ENCODE measurements at regions of chr5 and their contacts with region 1.

Region 1: GRCh38 chr5:39217365-39218281 is 1.7 kb downstream of the FYB1 start:
- DNase-seq: peak; percentile 76
- H3K27ac ChIP-seq: no peak overlapping the region
- CTCF ChIP-seq: peak; percentile 98

Region 2: DNA sequence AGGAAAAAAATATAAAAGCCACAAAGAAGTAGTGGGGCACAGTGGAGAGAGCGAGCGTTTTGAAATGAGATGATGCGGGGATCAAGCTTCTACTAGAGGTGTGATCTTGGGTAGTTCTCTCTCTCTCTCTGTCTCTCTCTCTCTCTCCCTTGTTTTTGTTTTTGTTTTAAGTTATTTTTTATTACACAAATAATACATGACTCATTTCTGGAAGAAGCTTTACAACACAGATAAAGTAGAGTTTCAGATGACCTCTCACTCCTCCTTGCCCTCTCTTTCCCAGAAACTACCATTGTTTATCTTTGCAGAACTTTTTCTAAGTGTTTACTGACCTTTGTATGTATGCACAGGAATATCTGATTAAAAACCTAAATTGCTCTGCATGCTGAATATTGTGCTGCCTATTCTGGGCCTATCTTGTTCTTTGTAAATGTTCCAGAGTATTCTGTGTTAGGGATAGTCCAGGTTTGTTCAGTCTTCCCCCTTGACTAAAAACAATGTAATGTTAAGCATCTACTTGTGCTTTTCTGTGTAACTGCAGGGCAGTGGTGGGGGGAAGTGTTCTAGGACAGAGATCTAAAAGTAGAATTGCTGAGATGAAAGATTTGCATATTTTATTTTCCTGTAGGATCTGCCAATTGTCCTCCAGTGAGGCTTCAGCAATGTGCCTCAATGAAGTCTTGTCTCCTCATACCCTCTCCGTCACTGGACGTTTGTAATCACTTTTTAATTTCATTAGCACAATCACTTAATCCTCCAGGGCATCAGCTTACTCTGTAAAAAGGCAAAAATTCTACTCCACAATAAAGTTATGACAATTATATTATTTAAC is 50.3 kb before region 1 on chr5:
- CTCF ChIA-PET with region 1: no interaction called
- POLR2A ChIA-PET with region 1: no interaction called
- DNase-seq: no peak
- H3K27ac ChIP-seq: no peak overlapping the region
- CTCF ChIP-seq: no peak

Region 3: DNA sequence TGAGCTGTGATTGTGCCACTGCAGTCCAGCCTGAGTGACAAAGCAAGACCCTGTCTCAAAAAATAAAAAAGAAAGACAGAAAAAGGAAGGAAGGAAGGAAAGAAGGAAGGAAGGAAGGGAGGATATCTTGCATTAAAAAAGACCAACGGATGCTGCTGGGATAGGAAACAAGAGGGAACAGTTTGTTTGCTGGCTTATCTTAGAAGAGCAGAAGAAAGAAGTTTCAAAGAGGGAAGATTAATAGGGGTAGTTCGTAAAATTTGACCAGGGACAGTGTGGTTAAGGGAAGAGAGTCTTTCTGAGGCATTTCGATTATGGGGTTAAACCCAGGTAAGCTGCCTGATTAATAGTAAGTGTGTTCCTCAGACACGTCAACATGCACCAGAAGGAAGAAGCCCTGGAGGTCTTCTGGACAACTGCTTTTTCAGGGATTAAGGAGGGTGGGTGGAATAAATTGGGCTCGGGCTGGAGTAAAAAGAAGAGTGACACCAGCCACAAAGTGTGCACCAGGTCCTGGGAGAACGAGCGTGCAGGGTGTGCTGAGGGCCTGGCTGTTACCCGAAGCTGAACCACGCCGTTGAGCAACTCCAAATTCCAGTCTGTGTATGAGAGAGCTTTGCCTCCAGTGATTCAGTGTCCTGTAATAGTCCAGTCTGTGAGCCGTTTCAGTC is 23.0 kb before region 1 on chr5:
- CTCF ChIA-PET with region 1: interaction called, 12 read pairs
- POLR2A ChIA-PET with region 1: no interaction called
- DNase-seq: peak; percentile 81
- H3K27ac ChIP-seq: no peak overlapping the region
- CTCF ChIP-seq: no peak

Region 4: DNA sequence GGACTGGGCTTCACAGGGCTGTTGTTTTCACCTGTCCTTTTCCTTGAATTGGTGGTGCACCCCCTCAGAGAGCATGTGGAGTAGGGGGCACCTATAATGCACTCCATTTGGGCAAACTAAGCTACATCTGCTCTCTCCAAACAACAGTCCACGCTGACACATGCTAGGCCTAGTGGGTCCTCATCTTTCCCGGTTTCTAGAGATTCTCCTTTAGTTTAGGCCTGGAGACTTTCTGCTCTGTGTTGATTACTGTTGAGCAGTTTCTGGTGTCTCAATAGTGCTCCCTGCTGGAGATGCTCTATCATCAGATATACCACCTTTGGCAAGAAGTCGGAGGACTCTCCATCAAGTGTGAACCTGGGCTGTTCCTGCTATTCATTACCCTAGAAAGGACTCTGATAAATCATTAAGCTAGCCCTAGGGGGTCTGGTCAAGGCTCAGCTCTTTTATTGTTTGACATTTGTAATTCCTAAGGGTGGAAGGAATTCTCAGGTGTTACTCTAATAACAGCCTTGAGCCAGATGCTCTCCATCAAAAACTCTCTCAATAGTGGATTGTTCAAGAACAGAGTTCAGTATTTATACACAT is 65.7 kb after region 1 on chr5:
- CTCF ChIA-PET with region 1: interaction called, 25 read pairs
- POLR2A ChIA-PET with region 1: no interaction called
- DNase-seq: peak; percentile 57
- H3K27ac ChIP-seq: no peak overlapping the region
- CTCF ChIP-seq: no peak; the same call in 1 of the 2 replicates

Region 5: DNA sequence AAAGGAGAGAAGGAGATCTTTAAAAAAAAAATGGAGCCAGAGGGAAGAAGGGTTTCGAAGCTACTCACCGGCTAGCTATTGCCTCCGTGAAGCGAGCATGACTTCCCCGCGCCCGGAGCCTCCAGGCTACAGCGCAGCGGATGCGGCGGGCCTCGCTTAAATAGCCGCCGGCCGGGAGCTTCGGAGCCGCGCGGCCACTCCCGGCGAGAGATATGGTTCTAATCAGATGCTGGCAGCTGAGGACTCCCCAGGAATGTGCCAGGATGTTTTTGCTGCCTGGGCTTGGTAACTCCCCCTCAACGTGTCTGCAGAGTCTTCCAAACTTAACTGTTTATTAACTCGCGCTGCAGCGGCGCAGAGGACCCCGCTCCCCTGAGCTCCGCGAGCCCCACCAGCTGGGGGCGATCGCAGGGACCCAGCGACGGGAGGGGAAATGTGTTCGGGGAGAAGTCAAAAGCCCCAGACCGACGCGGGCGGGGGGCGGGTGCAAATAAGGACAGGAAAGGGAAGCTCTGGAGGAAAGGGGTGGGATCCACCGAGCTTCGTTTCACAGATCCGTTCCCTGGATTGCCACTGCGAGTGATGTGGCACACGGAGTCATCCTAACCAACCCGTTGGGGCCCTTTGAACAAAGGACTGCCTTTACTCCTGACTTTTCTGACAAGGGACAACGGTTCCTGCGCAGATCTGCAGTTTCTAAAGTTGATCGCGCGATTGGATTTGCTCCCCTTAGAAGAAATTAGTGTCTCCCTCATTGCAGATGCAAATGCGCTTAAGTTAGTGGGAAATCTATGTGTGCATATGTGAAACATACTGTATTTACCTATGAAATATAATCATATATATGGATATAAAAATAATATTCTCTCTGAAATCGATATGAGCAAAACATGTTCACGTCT is 207.4 kb after region 1 on chr5 and contains the start of gene DAB2:
- CTCF ChIA-PET with region 1: no interaction called
- POLR2A ChIA-PET with region 1: no interaction called
- DNase-seq: peak; percentile 61
- H3K27ac ChIP-seq: 0 out of 2 replicates have a peak within 1 kb of the TSS, but pooled peaks have one; percentile 16
- CTCF ChIP-seq: peak; percentile 61

Region 6: DNA sequence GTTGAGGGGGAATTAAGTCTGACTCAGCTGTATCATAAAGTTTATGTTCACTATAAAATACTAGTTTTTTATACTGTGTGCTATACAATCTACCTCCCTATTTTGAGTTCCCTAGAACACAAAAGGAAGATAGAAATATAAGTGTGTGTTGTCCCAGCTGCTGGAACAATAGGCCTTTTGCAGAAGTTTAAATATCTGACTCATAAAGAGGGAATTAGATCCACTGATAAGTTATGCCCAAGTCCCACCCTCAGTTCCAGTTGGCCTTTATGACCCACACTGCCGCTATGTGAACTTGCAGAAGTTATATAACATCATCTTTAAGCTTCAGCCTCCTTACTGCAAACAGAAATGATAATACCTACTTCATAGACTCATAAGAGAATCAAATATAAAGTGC is 295.6 kb after region 1 on chr5:
- CTCF ChIA-PET with region 1: no interaction called
- POLR2A ChIA-PET with region 1: no interaction called
- DNase-seq: peak; percentile 34
- H3K27ac ChIP-seq: no peak overlapping the region
- CTCF ChIP-seq: no peak

Region 7: GRCh38 chr5:39624268-39624886 is 406.8 kb after region 1 on chr5:
- CTCF ChIA-PET with region 1: no interaction called
- POLR2A ChIA-PET with region 1: no interaction called
- DNase-seq: peak; percentile 73
- H3K27ac ChIP-seq: no peak overlapping the region
- CTCF ChIP-seq: no peak